Adrenal gland (tissue), 19 donors: ENCODE measurements at regions of chr17 and their contacts with region 1.

Region 1: GRCh38 chr17:72725433-72726068 is 366.9 kb downstream of the SLC39A11 start:
- DNase-seq: peak; percentile 24 to 75 (median 61)
- H3K4me3 ChIP-seq: no peak overlapping the region
- H3K27ac ChIP-seq: no peak overlapping the region
- H3K4me1 ChIP-seq: no peaks in the 10 kb centered on the region
- H3K27me3 ChIP-seq: no peaks in the 10 kb centered on the region
- CTCF ChIP-seq: peak; percentile 60 to 83 (median 80)
- POLR2A ChIP-seq: no peak

Region 2: DNA sequence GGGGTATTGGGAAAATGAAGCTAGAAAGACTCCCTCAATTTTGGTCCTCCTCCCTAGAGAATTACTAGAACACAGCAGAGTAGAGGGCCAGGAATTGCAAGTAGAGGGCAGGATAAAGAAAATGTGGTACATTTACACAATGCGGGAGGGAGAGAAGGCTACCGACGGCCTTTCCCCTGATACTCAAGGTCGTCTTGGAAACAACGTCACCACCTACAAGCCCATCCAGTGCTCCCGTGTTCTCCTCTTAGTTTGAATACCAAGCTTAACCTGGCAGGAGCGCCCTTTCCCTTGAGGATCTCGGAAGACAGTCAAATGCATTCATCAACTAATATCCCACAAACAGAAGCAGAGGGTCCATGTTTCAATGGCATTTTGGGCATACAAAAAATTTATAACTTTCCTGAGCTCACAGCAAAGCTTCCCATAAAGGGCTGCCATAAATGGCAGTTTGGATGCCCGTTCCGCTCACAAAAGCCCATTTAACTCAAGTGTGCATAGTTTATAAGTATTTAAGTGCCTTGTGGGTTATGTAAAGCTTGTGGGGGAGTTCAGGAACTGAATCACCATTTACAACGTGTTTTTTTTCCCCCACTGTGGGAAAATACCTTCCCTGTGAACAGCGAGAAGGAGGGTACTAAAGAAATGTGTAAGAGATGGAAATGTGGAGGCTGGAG is 47.7 kb before region 1 on chr17:
- intact Hi-C with region 1: loop called in 1 of 2 experiments (anchors 10 kb)
- DNase-seq: no peak
- H3K4me3 ChIP-seq: no peak overlapping the region
- H3K27ac ChIP-seq: no peak overlapping the region
- H3K4me1 ChIP-seq: no peaks in the 10 kb centered on the region
- H3K27me3 ChIP-seq: no peaks in the 10 kb centered on the region
- CTCF ChIP-seq: no peak
- POLR2A ChIP-seq: no peak

Region 3: GRCh38 chr17:73156166-73156840 is 430.8 kb after region 1 on chr17:
- intact Hi-C with region 1: loop called (anchors 2 to 10 kb)
- DNase-seq: peak; percentile 59 to 88 (median 78)
- H3K4me3 ChIP-seq: no peak overlapping the region
- H3K27ac ChIP-seq: peak overlapping the region in 1 of 5 donors; percentile 23
- H3K4me1 ChIP-seq: no peaks in the 10 kb centered on the region
- H3K27me3 ChIP-seq: no peaks in the 10 kb centered on the region
- CTCF ChIP-seq: peak; percentile 77 to 88 (median 86)
- POLR2A ChIP-seq: no peak

Region 4: DNA sequence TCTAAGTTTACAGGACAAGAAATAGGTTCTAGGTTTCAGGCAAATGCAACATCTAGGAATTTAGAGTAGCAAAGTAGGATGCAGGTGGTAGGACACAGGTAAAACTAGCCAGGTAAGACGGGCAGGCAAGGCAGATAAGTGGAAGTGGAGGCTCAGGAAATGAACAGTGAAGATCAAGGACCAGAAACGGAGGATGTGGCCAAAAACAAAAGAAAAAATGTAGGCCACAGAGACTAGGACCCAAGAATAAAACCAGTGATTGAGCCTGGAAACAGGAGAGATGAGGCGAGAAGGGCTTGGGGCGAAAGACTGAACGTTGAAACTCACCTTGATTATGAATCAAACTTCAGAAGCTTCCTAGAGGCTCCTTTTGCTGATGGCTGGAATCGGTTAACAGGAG is 512.2 kb after region 1 on chr17:
- intact Hi-C with region 1: loop called in 1 of 2 experiments (anchors 5 kb)
- DNase-seq: no peak
- H3K4me3 ChIP-seq: no peak overlapping the region
- H3K27ac ChIP-seq: no peak overlapping the region
- H3K4me1 ChIP-seq: peaks cover 9 to 31% of the 10 kb centered on the region in 2 donors
- H3K27me3 ChIP-seq: no peaks in the 10 kb centered on the region
- CTCF ChIP-seq: no peak
- POLR2A ChIP-seq: no peak

Region 5: GRCh38 chr17:73371285-73371684 is 645.7 kb after region 1 on chr17:
- intact Hi-C with region 1: loop called in 1 of 2 experiments (anchors 5 kb)
- DNase-seq: no peak
- H3K4me3 ChIP-seq: no peak overlapping the region
- H3K27ac ChIP-seq: no peak overlapping the region
- H3K4me1 ChIP-seq: peaks cover 0 to 5% of the 10 kb centered on the region in 2 donors
- H3K27me3 ChIP-seq: no peaks in the 10 kb centered on the region
- CTCF ChIP-seq: no peak
- POLR2A ChIP-seq: no peak

Region 6: DNA sequence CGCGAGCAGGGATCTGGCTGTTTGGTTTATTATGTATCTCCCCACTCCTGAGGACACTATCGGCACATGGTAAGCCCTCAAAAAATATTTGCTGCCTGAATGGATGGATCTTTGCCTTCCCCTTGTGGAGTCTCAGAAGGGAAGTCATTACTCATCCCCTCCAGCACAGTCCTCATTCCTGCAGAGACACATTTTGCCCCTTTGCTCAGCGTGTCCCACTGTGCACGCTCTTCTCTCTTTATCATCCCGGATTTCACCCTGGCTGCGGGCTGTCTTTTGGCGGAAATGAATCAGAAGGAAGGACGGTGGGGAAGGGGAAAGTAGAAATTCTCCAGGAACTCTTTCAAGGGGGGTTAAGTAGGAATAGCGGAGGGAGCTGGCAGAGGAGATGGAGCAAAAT is 711.4 kb after region 1 on chr17:
- intact Hi-C with region 1: no loop called
- DNase-seq: no peak
- H3K4me3 ChIP-seq: no peak overlapping the region
- H3K27ac ChIP-seq: no peak overlapping the region
- H3K4me1 ChIP-seq: no peaks in the 10 kb centered on the region
- H3K27me3 ChIP-seq: no peaks in the 10 kb centered on the region
- CTCF ChIP-seq: no peak
- POLR2A ChIP-seq: no peak